Naive thymus-derived CD4-positive, alpha-beta T cell (primary cell): ENCODE measurements at regions of chr12 and their contacts with region 1.

Region 1: GRCh38 chr12:116759783-116760621 is 21.9 kb downstream of the RNFT2 start:
- DNase-seq: peak in 7 of 9 donors; percentile 17 to 38 (median 19)
- ATAC-seq: no peak
- H3K4me3 ChIP-seq: no peak overlapping the region
- H3K4me3 Mint-ChIP-seq: peak overlapping the region in 9 of 10 donors; percentile 28 to 83 (median 72)
- H3K27ac ChIP-seq: no peak overlapping the region
- H3K27ac Mint-ChIP-seq: peak overlapping the region in 3 of 9 donors; percentile 33 to 81 (median 64)
- H3K4me1 ChIP-seq: no peaks in the 10 kb centered on the region
- H3K4me1 Mint-ChIP-seq: peaks cover 0 to 20% (median 0%) of the 10 kb centered on the region in 7 donors
- H3K27me3 ChIP-seq: no peaks in the 10 kb centered on the region
- H3K27me3 Mint-ChIP-seq: no peaks in the 10 kb centered on the region

Region 2: GRCh38 chr12:116882742-116883141 is 122.7 kb after region 1 on chr12:
- CTCF ChIA-PET with region 1: no interaction called
- POLR2A ChIA-PET with region 1: no interaction called
- intact Hi-C with region 1: loop called in 1 of 2 experiments (anchors 2 kb)
- DNase-seq: no peak
- ATAC-seq: no peak
- H3K4me3 ChIP-seq: no peak overlapping the region
- H3K4me3 Mint-ChIP-seq: peak overlapping the region in 9 of 10 donors; percentile 10 to 79 (median 71)
- H3K27ac ChIP-seq: no peak overlapping the region
- H3K27ac Mint-ChIP-seq: no peak overlapping the region
- H3K4me1 ChIP-seq: peaks cover 7 to 31% of the 10 kb centered on the region in 2 donors
- H3K4me1 Mint-ChIP-seq: peaks cover 28 to 43% (median 37%) of the 10 kb centered on the region in 7 donors
- H3K27me3 ChIP-seq: peaks cover 0 to 14% of the 10 kb centered on the region in 2 donors
- H3K27me3 Mint-ChIP-seq: peaks cover 54 to 84% (median 60%) of the 10 kb centered on the region in 5 donors

Region 3: GRCh38 chr12:116955382-116956021 is 195.5 kb after region 1 on chr12:
- CTCF ChIA-PET with region 1: interaction called, 3 read pairs
- POLR2A ChIA-PET with region 1: no interaction called
- intact Hi-C with region 1: loop called in 1 of 2 experiments (anchors 1 kb)
- DNase-seq: peak in 7 of 9 donors; percentile 21 to 49 (median 34)
- ATAC-seq: peak; percentile 60
- H3K4me3 ChIP-seq: no peak overlapping the region
- H3K4me3 Mint-ChIP-seq: no peak overlapping the region
- H3K27ac ChIP-seq: no peak overlapping the region
- H3K27ac Mint-ChIP-seq: peak overlapping the region in 1 of 9 donors; percentile 51
- H3K4me1 ChIP-seq: peaks cover 0 to 4% of the 10 kb centered on the region in 2 donors
- H3K4me1 Mint-ChIP-seq: peaks cover 4 to 24% (median 8%) of the 10 kb centered on the region in 7 donors
- H3K27me3 ChIP-seq: no peaks in the 10 kb centered on the region
- H3K27me3 Mint-ChIP-seq: no peaks in the 10 kb centered on the region